PC-9 (cell line): ENCODE measurements at regions of chr20 and their contacts with region 1.

Region 1: DNA sequence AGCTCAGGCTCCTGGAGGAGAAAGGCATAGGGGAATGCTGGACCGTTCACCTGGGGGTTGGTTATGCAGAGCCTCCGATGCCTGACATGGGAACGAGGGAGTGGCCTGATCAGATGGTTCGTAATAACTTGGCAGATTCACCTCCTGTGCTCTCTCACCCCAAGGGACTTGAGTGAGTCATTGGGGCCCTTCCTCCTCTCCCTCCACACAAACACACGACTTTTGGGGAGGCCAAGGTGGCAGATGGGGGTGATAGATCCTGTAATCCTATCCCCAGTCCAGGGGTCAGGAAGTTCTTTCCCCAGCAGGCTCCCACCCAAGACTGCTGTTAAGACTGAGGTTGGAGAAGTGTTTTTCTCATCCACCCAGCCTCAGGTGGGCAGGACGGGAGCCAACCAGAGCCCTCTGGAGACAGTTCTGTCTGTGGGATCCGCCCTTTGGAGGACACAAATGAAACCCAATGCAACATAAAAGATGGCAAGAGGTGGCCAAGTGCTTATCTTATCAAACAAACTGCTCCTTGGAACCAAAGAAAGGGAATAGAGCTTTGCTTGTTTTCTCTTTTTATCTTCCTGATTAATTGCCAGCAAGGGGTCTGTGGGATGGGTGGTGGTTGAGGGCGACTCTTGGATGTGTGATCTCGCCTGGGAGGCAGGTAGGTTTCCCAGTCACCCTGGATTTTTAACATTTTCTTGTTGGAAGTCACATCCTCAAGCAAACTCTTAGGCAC is 45.4 kb upstream of the ARFGEF2 start:
- DNase-seq: no peak
- H3K4me3 ChIP-seq: no peak overlapping the region
- H3K27ac ChIP-seq: no peak overlapping the region
- H3K4me1 ChIP-seq: peaks cover 35% of the 10 kb centered on the region
- H3K27me3 ChIP-seq: no peaks in the 10 kb centered on the region
- CTCF ChIP-seq: no peak

Region 2: DNA sequence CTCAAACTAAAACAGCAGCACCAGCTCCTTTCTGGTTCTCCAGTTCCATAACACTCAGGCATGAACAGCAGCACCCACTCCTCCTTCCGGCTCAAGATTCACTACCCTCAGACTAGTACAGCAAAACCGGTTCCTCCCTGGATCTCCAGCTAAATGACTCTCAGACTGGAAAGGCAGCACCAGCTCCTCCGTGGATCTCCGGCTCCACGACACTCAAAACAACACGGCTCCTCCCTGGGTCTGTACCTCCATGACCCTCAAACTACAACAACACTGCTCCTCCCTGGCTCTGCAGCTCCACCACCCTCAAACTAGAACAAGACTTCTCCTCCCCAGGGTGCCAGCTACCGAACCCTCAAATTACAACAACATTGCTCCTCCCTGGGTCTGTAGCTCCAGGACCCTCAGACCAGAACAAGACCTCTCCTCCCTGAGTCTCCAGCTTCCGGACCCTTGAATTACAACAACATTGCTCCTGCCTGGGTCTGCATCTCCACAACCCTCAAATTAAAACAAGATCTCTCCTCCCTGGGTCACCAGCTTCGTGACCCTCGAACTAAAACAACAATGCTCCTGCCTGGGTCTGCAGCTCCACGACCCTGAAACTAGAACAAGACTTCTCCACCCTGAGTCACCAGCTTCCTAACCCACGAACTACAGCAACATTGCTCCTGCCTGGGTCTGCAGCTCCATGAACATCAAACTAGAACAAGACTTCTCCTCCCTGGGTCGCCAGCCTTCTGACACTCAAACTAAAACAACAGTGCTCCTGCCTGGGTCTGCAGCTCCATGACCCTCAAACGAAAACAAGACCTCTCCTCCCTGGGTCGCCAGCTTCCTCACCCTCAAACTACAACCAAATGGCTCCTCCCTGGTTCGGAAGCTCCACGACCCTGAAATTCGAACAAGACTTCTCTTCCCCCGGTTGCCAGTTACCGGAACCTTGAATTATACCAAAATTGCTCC is 372.9 kb before region 1 on chr20:
- CTCF ChIA-PET with region 1: no interaction called
- POLR2A ChIA-PET with region 1: no interaction called
- intact Hi-C with region 1: no loop called
- DNase-seq: peak in 1 of 2 experiments; percentile 33
- H3K4me3 ChIP-seq: no peak overlapping the region
- H3K27ac ChIP-seq: no peak overlapping the region
- H3K4me1 ChIP-seq: no peaks in the 10 kb centered on the region
- H3K27me3 ChIP-seq: peaks cover 47% of the 10 kb centered on the region
- CTCF ChIP-seq: no peak

Region 3: DNA sequence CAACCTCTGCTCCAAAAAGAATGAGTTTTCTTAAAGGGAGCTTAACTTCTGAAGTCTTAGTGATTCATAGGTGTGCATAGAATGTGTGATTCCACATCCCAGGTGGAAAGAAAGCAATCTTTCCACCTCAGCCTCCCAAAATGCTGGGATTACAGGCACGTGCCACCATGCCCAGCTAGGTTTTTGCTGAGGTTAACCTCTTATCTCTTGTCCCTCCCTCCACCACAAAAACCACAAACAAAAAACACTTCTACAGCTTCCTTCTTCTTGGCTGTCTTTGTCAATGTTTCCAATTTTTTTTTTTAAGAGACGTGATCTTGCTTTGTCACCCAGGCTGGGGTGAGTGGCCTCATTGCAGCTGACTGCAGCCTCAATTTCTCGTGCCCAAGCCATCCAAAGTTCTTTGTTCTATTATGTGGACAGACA is 161.9 kb after region 1 on chr20:
- CTCF ChIA-PET with region 1: no interaction called
- POLR2A ChIA-PET with region 1: interaction called, 17 read pairs
- intact Hi-C with region 1: no loop called
- DNase-seq: peak; percentile 40 to 72
- H3K4me3 ChIP-seq: no peak overlapping the region
- H3K27ac ChIP-seq: peak overlapping the region; percentile 16; the same call in 1 of the 2 replicates
- H3K4me1 ChIP-seq: peaks cover 17% of the 10 kb centered on the region
- H3K27me3 ChIP-seq: no peaks in the 10 kb centered on the region
- CTCF ChIP-seq: no peak